Activated CD4-positive, alpha-beta memory T cell treated with anti-CD3 and anti-CD28 coated beads for 36 hours (primary cell): ENCODE measurements at regions of chr11 and their contacts with region 1.

Region 1: GRCh38 chr11:120952461-120953434 is 71.2 kb upstream of the TBCEL start:
- DNase-seq: peak; percentile 80
- H3K4me3 Mint-ChIP-seq: peak overlapping the region; percentile 24
- H3K27ac Mint-ChIP-seq: no peak overlapping the region
- H3K4me1 Mint-ChIP-seq: peaks cover 15% of the 10 kb centered on the region
- H3K27me3 Mint-ChIP-seq: peaks cover 24% of the 10 kb centered on the region

Region 2: DNA sequence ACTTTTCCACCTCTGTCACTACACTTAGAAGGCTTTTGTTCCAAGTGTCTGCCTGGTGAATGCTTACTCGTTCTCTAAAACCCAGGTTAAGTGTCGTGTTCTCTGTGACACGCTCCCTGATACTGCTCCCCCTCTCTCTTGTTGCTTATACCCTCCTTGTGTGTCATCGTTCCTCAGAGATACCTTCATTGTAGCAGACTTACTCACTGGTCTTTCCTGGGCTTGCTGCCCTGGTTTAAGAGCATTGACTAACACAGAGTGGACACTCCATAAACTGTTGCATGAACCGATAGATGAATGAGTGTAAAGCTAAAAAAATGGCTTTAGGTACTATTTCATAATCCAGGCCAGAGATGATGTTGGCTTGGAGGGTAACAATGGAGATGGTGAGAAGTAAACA is 269.9 kb before region 1 on chr11:
- CTCF ChIA-PET with region 1: no interaction called
- POLR2A ChIA-PET with region 1: no interaction called
- intact Hi-C with region 1: loop called (anchors 10 kb)
- DNase-seq: no peak
- H3K4me3 Mint-ChIP-seq: no peak overlapping the region
- H3K27ac Mint-ChIP-seq: no peak overlapping the region
- H3K4me1 Mint-ChIP-seq: no peaks in the 10 kb centered on the region
- H3K27me3 Mint-ChIP-seq: peaks cover 17% of the 10 kb centered on the region

Region 3: DNA sequence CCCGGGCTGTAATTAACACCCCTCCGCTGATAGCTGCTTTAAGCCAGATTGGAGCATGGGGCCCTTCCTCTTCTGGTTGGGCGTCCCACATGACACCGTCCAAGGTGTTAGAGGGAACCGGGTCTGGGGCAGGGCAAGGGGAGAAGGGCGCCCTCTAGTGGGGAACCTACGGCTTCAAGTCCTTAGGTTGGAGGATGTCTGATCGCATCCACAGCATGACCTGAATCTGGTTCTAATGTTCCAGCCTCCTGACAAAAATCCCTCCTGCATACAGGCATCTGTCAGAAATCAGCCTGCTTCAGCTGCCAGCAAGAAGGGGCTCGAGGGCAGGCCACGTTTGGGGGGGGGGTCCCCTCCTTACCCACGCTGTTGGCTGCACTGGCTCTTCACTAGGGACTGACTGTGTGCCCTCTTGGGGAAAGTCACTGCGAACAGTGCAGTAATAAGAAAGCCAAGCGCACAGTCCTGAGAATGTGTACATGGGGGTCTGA is 23.0 kb before region 1 on chr11:
- CTCF ChIA-PET with region 1: interaction called, 7 read pairs
- POLR2A ChIA-PET with region 1: no interaction called
- intact Hi-C with region 1: loop called (anchors 2 kb)
- DNase-seq: peak; percentile 57
- H3K4me3 Mint-ChIP-seq: no peak overlapping the region
- H3K27ac Mint-ChIP-seq: no peak overlapping the region
- H3K4me1 Mint-ChIP-seq: no peaks in the 10 kb centered on the region
- H3K27me3 Mint-ChIP-seq: no peaks in the 10 kb centered on the region

Region 4: DNA sequence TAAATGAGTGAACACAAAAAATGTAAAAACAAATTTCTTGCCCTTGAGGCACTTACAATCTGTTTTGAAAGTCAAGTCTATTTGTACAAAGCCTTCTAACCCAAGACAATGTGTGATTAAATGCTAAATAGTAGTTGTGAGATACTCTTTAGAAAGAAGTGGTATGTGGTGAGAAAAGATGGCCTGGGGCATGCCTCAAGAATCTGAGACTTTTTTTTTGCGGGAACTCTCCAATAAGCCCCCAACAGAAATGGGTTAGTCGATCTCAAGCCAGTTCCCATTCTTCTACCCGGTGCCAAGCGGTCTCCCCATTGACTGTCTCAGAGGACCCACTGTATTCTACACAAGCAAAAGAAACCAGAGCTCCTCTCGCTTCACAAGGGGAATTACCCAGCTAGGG is 44.2 kb after region 1 on chr11:
- CTCF ChIA-PET with region 1: no interaction called
- POLR2A ChIA-PET with region 1: no interaction called
- intact Hi-C with region 1: no loop called
- DNase-seq: no peak
- H3K4me3 Mint-ChIP-seq: no peak overlapping the region
- H3K27ac Mint-ChIP-seq: no peak overlapping the region
- H3K4me1 Mint-ChIP-seq: no peaks in the 10 kb centered on the region
- H3K27me3 Mint-ChIP-seq: peaks cover 4% of the 10 kb centered on the region